ENCODE measurements at regions of chr1 and their contacts with region 1.

Region 1: GRCh38 chr1:43934101-43934985 is 742 bp downstream of the ARTN start:
- DNase-seq: peak in 1 of 2 donors; percentile 72
- ATAC-seq: peak; percentile 62 to 70
- H3K4me3 ChIP-seq: peak overlapping the region in 3 of 4 donors; percentile 45 to 54 (median 46)
- H3K27ac ChIP-seq: peak overlapping the region in 3 of 4 donors; percentile 2 to 39 (median 30)
- H3K4me1 ChIP-seq: peaks cover 27 to 28% of the 10 kb centered on the region in 2 donors
- H3K27me3 ChIP-seq: no peaks in the 10 kb centered on the region
- CTCF ChIP-seq: peak; percentile 75 to 93 (median 86)
- POLR2A ChIP-seq: no peak

Region 2: GRCh38 chr1:43774359-43774758 is 160.0 kb before region 1 on chr1:
- in situ Hi-C with region 1: loop called in 3 of 4 experiments (anchors 5 kb)
- intact Hi-C with region 1: no loop called
- DNase-seq: no peak
- ATAC-seq: no peak
- H3K4me3 ChIP-seq: no peak overlapping the region
- H3K27ac ChIP-seq: no peak overlapping the region
- H3K4me1 ChIP-seq: peaks cover 19 to 20% of the 10 kb centered on the region in 2 donors
- H3K27me3 ChIP-seq: no peaks in the 10 kb centered on the region
- CTCF ChIP-seq: no peak
- POLR2A ChIP-seq: no peak

Region 3: GRCh38 chr1:43868741-43869067 is 65.6 kb before region 1 on chr1:
- in situ Hi-C with region 1: no loop called
- intact Hi-C with region 1: no loop called
- DNase-seq: peak in 1 of 2 donors; percentile 17
- ATAC-seq: peak; percentile 25 to 40
- H3K4me3 ChIP-seq: no peak overlapping the region
- H3K27ac ChIP-seq: peak overlapping the region; percentile 51 to 73 (median 60)
- H3K4me1 ChIP-seq: peaks cover 64 to 69% of the 10 kb centered on the region in 2 donors
- H3K27me3 ChIP-seq: no peaks in the 10 kb centered on the region
- CTCF ChIP-seq: no peak
- POLR2A ChIP-seq: no peak